WTC11 (cell line): ENCODE measurements at regions of chr19 and their contacts with region 1.

Region 1: DNA sequence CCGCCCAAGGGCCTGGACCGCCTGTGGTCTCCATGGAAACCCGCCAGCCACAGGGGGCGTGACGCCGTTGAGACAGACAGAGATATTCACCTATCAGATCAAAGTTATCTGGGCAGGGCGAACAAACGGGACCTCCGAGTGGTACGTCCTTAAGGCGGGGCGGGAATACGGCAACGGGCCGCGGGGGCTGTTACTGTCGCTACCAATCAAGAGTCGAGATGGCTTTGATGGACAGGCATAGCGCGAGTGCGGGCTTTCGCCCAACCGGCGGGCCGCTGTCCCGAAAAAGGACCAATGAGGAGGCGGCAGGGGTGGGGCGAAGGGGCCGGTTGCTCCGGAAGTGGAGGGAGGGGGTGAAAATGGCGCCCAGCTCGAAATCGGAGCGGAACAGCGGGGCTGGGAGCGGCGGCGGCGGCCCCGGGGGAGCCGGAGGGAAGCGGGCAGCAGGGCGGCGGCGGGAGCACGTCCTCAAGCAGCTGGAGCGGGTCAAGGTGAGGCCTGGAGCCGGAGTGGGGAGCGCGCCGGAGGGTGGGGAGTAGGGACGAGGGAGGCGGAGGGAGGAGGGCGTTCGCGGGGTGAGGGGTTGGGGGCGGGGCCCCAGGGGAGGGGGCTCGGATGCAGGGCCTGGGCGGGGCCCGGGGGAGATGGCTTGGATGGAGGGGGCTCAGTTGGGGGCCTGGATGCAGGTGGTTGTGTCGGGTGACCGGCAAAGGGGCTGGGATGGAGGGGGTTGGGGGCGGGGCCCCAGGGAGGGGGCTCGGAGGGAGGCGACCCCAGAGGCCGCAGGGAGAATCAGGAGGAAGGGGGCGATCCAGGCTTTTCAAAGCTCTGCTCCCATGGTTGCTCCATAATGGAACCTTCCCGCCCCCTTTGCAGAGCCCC is at the start of gene DCAF15:
- DNase-seq: peak; percentile 99
- ATAC-seq: peak; percentile 98
- H3K4me3 Mint-ChIP-seq: peak within 1 kb of the TSS; percentile 87
- H3K27ac Mint-ChIP-seq: peak within 1 kb of the TSS; percentile 57
- H3K4me1 Mint-ChIP-seq: peaks cover 8% of the 10 kb centered on the region
- H3K27me3 Mint-ChIP-seq: no peaks in the 10 kb centered on the region; the same call in none of the 2 replicates
- CTCF ChIP-seq: no peak
- total RNA-seq, gene DCAF15: 82.9 to 89.0 TPM (median 83.3 TPM) in 3 replicates

Region 2: GRCh38 chr19:13887517-13887916 is 64.9 kb before region 1 on chr19:
- CTCF ChIA-PET with region 1: interaction called, 27 read pairs
- POLR2A ChIA-PET with region 1: no interaction called
- DNase-seq: no peak
- ATAC-seq: no peak
- H3K4me3 Mint-ChIP-seq: no peak overlapping the region
- H3K27ac Mint-ChIP-seq: no peak overlapping the region
- H3K4me1 Mint-ChIP-seq: 0 out of 2 replicates have a peak, but pooled peaks cover 4% of the 10 kb centered on the region
- H3K27me3 Mint-ChIP-seq: no peaks in the 10 kb centered on the region
- CTCF ChIP-seq: no peak

Region 3: DNA sequence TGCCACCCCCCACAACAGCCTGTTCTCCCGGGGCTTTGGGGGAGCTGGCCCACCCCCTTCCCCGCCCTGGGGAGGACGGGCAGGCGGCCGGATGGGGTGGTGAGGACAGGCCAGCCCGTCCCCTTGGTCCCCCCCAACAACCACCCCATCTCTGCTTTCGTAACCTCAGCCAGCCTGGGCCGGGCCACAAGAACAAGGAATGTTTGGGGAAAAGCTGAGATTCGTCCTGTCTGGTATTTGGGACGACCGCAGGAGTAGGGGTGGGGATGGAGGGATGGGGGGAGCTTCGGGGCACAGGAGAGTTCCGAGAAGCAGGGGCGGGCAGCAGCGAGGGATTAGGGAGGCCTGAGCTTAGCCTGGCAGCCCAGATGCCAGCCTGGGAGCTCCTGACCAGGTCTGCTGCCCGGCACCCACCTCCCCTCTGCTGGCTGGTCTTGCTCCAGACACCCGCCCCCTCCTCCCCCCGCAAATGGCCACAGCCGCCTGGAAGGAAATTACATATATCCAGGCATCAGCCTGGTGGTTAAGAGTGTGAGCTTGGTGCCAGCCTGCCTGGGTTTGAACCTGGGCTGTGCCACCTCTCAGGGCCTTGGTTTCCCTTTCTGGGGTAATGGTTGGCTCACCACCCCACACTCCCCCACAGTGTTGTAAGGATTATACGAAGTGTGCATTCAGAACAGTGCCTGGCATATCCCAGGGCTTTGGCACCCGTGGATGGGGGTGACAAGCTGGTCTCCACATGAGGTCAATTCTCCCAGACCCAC is 13.9 kb before region 1 on chr19 and contains the start of gene PODNL1:
- CTCF ChIA-PET with region 1: interaction called, 39 read pairs
- POLR2A ChIA-PET with region 1: interaction called, 5 read pairs
- DNase-seq: no peak
- ATAC-seq: no peak
- H3K4me3 Mint-ChIP-seq: peak within 1 kb of the TSS; percentile 29; the same call in 1 of the 2 replicates
- H3K27ac Mint-ChIP-seq: no peak within 1 kb of the TSS
- H3K4me1 Mint-ChIP-seq: peaks cover 29% of the 10 kb centered on the region
- H3K27me3 Mint-ChIP-seq: no peaks in the 10 kb centered on the region; the same call in 1 of the 2 replicates
- CTCF ChIP-seq: no peak
- total RNA-seq, gene PODNL1: 1.1 to 1.4 TPM (median 1.4 TPM) in 3 replicates

Region 4: GRCh38 chr19:14048443-14049153 is 96.2 kb after region 1 on chr19:
- CTCF ChIA-PET with region 1: interaction called, 20 read pairs
- POLR2A ChIA-PET with region 1: no interaction called
- DNase-seq: peak; percentile 92
- ATAC-seq: peak; percentile 98
- H3K4me3 Mint-ChIP-seq: no peak overlapping the region
- H3K27ac Mint-ChIP-seq: no peak overlapping the region
- H3K4me1 Mint-ChIP-seq: no peaks in the 10 kb centered on the region
- H3K27me3 Mint-ChIP-seq: no peaks in the 10 kb centered on the region
- CTCF ChIP-seq: peak; percentile 89